ENCODE measurements at regions of chr3 and their contacts with region 1.

Region 1: GRCh38 chr3:194315088-194315964 is 35.8 kb downstream of the CPN2 start:
- DNase-seq: peak; percentile 94
- H3K4me3 ChIP-seq: peak overlapping the region; percentile 22 to 49 (median 40)
- H3K27ac ChIP-seq: peak overlapping the region; percentile 58 to 90 (median 74)
- H3K4me1 ChIP-seq: peaks cover 0 to 48% (median 42%) of the 10 kb centered on the region in 4 donors
- H3K27me3 ChIP-seq: no peaks in the 10 kb centered on the region
- CTCF ChIP-seq: peak; percentile 82 to 92 (median 88)
- EP300 ChIP-seq: peak in 3 of 4 donors; percentile 1 to 44 (median 35)
- POLR2A ChIP-seq: no peak

Region 2: GRCh38 chr3:193780810-193781472 is 534.4 kb before region 1 on chr3:
- intact Hi-C with region 1: loop called (anchors 1 kb)
- DNase-seq: peak; percentile 88
- H3K4me3 ChIP-seq: no peak overlapping the region
- H3K27ac ChIP-seq: peak overlapping the region; percentile 30 to 68 (median 53)
- H3K4me1 ChIP-seq: peaks cover 0 to 16% (median 12%) of the 10 kb centered on the region in 4 donors
- H3K27me3 ChIP-seq: no peaks in the 10 kb centered on the region
- CTCF ChIP-seq: peak; percentile 70 to 89 (median 80)
- EP300 ChIP-seq: no peak
- POLR2A ChIP-seq: no peak

Region 3: GRCh38 chr3:194003125-194004057 is 311.9 kb before region 1 on chr3:
- intact Hi-C with region 1: loop called (anchors 2 kb)
- DNase-seq: peak; percentile 95
- H3K4me3 ChIP-seq: peak overlapping the region; percentile 26 to 53 (median 45)
- H3K27ac ChIP-seq: peak overlapping the region; percentile 77 to 87 (median 84)
- H3K4me1 ChIP-seq: peaks cover 0 to 24% (median 21%) of the 10 kb centered on the region in 4 donors
- H3K27me3 ChIP-seq: no peaks in the 10 kb centered on the region
- CTCF ChIP-seq: no peak
- EP300 ChIP-seq: peak; percentile 19 to 37 (median 32)
- POLR2A ChIP-seq: peak in 1 of 2 donors; percentile 21

Region 4: DNA sequence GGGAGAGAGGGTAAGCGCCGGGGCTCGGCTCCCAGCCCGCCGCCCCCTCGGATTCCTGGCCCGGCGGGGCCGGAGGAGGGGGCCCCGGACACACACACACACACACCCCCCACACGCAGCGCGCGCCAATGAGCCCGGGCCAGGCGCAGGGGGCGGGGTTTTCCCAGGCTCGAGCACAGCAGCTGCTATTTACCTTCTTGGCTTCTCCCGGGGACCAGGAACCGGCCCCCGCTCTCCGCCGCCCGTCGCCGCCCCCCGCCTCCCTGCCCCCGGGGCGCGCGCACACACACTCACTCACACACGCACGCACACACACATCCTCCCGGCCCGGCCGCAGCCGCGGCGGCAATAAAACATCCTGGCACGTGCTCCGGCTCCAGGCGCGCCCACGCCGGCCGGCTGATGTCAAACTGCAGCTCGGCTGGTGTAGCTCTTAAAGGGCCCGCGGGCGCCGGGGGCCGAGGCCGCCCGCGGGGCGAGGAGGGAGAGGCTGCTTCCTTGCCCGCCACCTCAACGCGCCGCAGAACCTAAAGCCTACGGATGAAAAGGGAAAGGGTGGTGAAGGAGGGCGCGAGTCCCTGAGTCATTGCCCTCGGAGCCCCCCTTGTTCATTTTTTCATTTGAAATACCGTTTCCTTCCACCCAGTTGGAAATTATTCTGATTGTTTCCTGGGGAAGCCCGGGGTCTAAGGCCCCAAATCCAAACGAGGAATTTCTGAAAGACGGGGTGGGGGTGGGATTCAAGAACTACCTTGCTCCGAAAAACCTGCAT is 180.4 kb before region 1 on chr3:
- intact Hi-C with region 1: loop called (anchors 1 kb)
- DNase-seq: peak; percentile 97
- H3K4me3 ChIP-seq: peak overlapping the region; percentile 56 to 68 (median 64)
- H3K27ac ChIP-seq: peak overlapping the region; percentile 90 to 99 (median 96)
- H3K4me1 ChIP-seq: peaks cover 0 to 71% (median 59%) of the 10 kb centered on the region in 4 donors
- H3K27me3 ChIP-seq: no peaks in the 10 kb centered on the region
- CTCF ChIP-seq: no peak
- EP300 ChIP-seq: peak; percentile 51 to 87 (median 69)
- POLR2A ChIP-seq: peak; percentile 28 to 49

Region 5: GRCh38 chr3:194270627-194271459 is 44.5 kb before region 1 on chr3:
- intact Hi-C with region 1: loop called (anchors 1 kb)
- DNase-seq: peak; percentile 97
- H3K4me3 ChIP-seq: no peak overlapping the region
- H3K27ac ChIP-seq: peak overlapping the region; percentile 89 to 92 (median 90)
- H3K4me1 ChIP-seq: peaks cover 0 to 67% (median 58%) of the 10 kb centered on the region in 4 donors
- H3K27me3 ChIP-seq: no peaks in the 10 kb centered on the region
- CTCF ChIP-seq: no peak
- EP300 ChIP-seq: peak in 3 of 4 donors; percentile 90 to 92 (median 91)
- POLR2A ChIP-seq: no peak

Region 6: DNA sequence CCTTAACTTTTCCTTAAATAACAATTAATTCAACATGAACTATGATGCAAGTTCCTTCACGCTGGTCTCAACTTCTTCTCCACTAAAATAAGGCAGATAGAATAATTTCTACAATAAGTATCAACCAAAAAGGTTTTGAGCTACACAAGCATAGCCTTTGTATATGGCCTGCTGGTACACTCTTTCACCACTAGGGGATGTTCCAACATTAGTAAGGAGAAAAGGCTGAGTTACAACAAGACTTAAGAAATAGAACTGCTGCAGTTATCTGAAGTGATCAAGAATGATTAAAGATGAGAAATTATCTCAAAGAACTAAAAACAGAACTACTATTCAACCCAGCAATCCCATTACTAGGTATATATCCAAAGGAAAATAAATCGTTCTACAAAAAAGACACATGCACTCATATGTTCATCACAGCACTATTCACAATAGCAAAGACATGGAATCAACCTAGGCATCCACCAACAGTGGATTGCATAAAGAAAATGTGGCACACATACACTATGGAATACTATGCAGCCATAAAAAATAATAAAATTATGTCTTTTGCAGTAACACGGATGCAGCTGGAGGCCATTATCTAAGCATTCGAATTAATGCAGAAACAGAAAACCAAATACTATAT is 157.1 kb after region 1 on chr3:
- intact Hi-C with region 1: no loop called
- DNase-seq: no peak
- H3K4me3 ChIP-seq: no peak overlapping the region
- H3K27ac ChIP-seq: no peak overlapping the region
- H3K4me1 ChIP-seq: peaks cover 0 to 15% (median 5%) of the 10 kb centered on the region in 4 donors
- H3K27me3 ChIP-seq: no peaks in the 10 kb centered on the region
- CTCF ChIP-seq: peak; percentile 88 to 96 (median 95)
- EP300 ChIP-seq: no peak
- POLR2A ChIP-seq: no peak

Region 7: DNA sequence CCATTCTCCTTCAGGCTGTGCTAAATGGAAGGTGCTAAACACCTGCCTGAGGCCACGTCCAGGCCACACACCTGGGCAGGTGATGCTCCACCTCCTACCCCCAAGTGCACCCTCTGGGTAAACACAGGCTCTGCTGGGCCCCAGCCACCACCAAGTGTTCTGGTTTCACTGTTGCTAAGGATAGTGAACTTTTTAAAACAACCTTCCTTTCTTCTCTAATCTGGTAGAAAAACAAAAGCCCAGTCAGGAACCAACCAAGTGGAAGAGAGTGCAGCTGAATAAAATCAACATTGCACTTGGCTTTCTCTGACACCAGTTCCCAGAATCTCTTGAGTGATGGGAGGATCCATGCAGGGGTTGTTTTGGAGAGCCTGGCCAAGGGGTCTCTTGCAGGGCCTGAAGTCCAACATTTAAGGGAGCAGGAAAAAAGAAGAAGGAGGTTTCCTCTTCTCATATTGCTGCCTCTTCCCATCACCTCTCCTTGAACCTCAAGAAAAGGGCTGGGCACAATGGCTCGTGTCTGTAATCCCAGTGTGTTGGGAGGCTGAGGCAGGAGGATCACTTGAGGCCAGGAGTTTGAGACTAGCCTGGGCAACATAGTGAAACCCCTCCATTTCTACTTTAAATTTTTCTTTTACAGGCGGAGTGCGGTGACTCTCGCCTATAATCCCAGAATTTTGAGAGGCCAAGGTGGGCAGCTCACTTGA is 197.7 kb after region 1 on chr3:
- intact Hi-C with region 1: no loop called
- DNase-seq: no peak
- H3K4me3 ChIP-seq: no peak overlapping the region
- H3K27ac ChIP-seq: no peak overlapping the region
- H3K4me1 ChIP-seq: no peaks in the 10 kb centered on the region
- H3K27me3 ChIP-seq: no peaks in the 10 kb centered on the region
- CTCF ChIP-seq: no peak
- EP300 ChIP-seq: no peak
- POLR2A ChIP-seq: no peak

Measured in sigmoid colon (tissue), 7 donors.